CD4-positive, alpha-beta memory T cell (primary cell): ENCODE measurements at regions of chr17 and their contacts with region 1.

Region 1: GRCh38 chr17:76737082-76737675 is at the start of gene SRSF2:
- DNase-seq: peak; percentile 99 to 100 (median 100)
- H3K4me3 ChIP-seq: peak within 1 kb of the TSS; percentile 76 to 93
- H3K4me3 Mint-ChIP-seq: peak within 1 kb of the TSS; percentile 92 to 98 (median 96)
- H3K27ac ChIP-seq: peak within 1 kb of the TSS; percentile 95
- H3K27ac Mint-ChIP-seq: peak within 1 kb of the TSS; percentile 98 to 100 (median 99)
- H3K4me1 ChIP-seq: peaks cover 58% of the 10 kb centered on the region
- H3K4me1 Mint-ChIP-seq: peaks cover 38 to 66% (median 49%) of the 10 kb centered on the region in 4 donors
- H3K27me3 ChIP-seq: no peaks in the 10 kb centered on the region
- H3K27me3 Mint-ChIP-seq: no peaks in the 10 kb centered on the region
- total RNA-seq, gene SRSF2: 327 to 330 TPM

Region 2: GRCh38 chr17:76747716-76748363 is 10.7 kb after region 1 on chr17:
- CTCF ChIA-PET with region 1: no interaction called
- POLR2A ChIA-PET with region 1: interaction called, 62 read pairs
- intact Hi-C with region 1: loop called (anchors 1 kb)
- DNase-seq: no peak
- H3K4me3 ChIP-seq: no peak overlapping the region
- H3K4me3 Mint-ChIP-seq: no peak overlapping the region
- H3K27ac ChIP-seq: no peak overlapping the region
- H3K27ac Mint-ChIP-seq: no peak overlapping the region
- H3K4me1 ChIP-seq: peaks cover 17% of the 10 kb centered on the region
- H3K4me1 Mint-ChIP-seq: peaks cover 9 to 22% (median 16%) of the 10 kb centered on the region in 4 donors
- H3K27me3 ChIP-seq: no peaks in the 10 kb centered on the region
- H3K27me3 Mint-ChIP-seq: no peaks in the 10 kb centered on the region

Region 3: GRCh38 chr17:76753061-76753961 is 16.1 kb after region 1 on chr17:
- CTCF ChIA-PET with region 1: no interaction called
- POLR2A ChIA-PET with region 1: interaction called, 62 read pairs
- intact Hi-C with region 1: loop called (anchors 1 kb)
- DNase-seq: peak; percentile 65 to 82 (median 73)
- H3K4me3 ChIP-seq: peak overlapping the region; percentile 46 to 62
- H3K4me3 Mint-ChIP-seq: peak overlapping the region; percentile 87 to 93 (median 91)
- H3K27ac ChIP-seq: peak overlapping the region; percentile 69
- H3K27ac Mint-ChIP-seq: peak overlapping the region; percentile 95 to 99 (median 97)
- H3K4me1 ChIP-seq: peaks cover 36% of the 10 kb centered on the region
- H3K4me1 Mint-ChIP-seq: peaks cover 23 to 33% (median 27%) of the 10 kb centered on the region in 4 donors
- H3K27me3 ChIP-seq: no peaks in the 10 kb centered on the region
- H3K27me3 Mint-ChIP-seq: no peaks in the 10 kb centered on the region

Region 4: DNA sequence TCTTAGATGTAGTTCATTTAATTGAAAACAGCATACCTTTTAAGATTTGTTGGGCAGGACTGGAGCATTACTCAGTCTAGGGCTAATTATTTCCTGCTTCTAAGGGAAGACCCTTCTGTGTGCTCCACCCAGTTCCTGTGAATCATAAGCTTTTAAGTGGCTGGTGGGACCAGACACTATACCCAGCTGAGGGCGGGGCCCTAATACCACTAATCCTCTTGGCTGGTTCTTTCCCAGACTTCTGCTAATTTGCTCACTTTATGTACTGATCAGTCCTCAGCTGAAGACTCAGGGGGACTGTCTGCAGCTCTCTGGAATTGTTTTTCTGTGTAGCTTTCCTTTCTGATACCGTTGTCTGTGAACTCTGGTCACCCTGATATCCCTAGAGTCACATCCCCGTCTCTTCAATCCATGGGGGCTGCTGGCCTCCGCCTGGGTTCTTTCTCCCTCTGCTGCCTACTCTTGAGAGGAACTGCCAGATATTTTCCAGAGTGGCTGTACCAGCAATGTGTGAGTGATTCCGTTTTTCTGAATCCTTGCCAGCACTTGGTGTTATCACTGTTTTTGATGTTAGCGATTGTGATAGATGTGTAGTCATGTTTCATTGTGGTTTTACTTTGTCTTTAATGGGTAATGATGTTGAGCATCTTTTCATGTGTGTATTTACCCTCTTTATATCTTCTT is 35.8 kb after region 1 on chr17:
- CTCF ChIA-PET with region 1: interaction called, 3 read pairs
- POLR2A ChIA-PET with region 1: interaction called, 93 read pairs
- intact Hi-C with region 1: loop called (anchors 1 kb)
- DNase-seq: peak; percentile 70 to 90 (median 73)
- H3K4me3 ChIP-seq: peak overlapping the region; percentile 25 to 31
- H3K4me3 Mint-ChIP-seq: peak overlapping the region; percentile 82 to 92 (median 85)
- H3K27ac ChIP-seq: peak overlapping the region; percentile 78
- H3K27ac Mint-ChIP-seq: peak overlapping the region; percentile 96 to 99 (median 98)
- H3K4me1 ChIP-seq: peaks cover 16% of the 10 kb centered on the region
- H3K4me1 Mint-ChIP-seq: peaks cover 19 to 27% (median 24%) of the 10 kb centered on the region in 4 donors
- H3K27me3 ChIP-seq: no peaks in the 10 kb centered on the region
- H3K27me3 Mint-ChIP-seq: no peaks in the 10 kb centered on the region

Region 5: GRCh38 chr17:77140166-77140878 is 403.1 kb after region 1 on chr17:
- CTCF ChIA-PET with region 1: no interaction called
- POLR2A ChIA-PET with region 1: interaction called, 7 read pairs
- intact Hi-C with region 1: loop called (anchors 5 kb)
- DNase-seq: peak; percentile 98 to 99 (median 99)
- H3K4me3 ChIP-seq: peak overlapping the region; percentile 38 to 68
- H3K4me3 Mint-ChIP-seq: peak overlapping the region; percentile 81 to 92 (median 85)
- H3K27ac ChIP-seq: peak overlapping the region; percentile 75
- H3K27ac Mint-ChIP-seq: peak overlapping the region; percentile 78 to 95 (median 93)
- H3K4me1 ChIP-seq: peaks cover 47% of the 10 kb centered on the region
- H3K4me1 Mint-ChIP-seq: peaks cover 28 to 65% (median 49%) of the 10 kb centered on the region in 4 donors
- H3K27me3 ChIP-seq: no peaks in the 10 kb centered on the region
- H3K27me3 Mint-ChIP-seq: no peaks in the 10 kb centered on the region